ENCODE measurements at regions of chr10 and their contacts with region 1.

Region 1: GRCh38 chr10:689433-690371 is at the start of gene DIP2C:
- DNase-seq: peak; percentile 92
- H3K4me3 ChIP-seq: peak within 1 kb of the TSS; percentile 82 to 97 (median 90)
- H3K27ac ChIP-seq: peak within 1 kb of the TSS; percentile 95 to 99 (median 98)
- H3K4me1 ChIP-seq: peaks cover 0 to 48% (median 31%) of the 10 kb centered on the region in 4 donors
- H3K27me3 ChIP-seq: no peaks in the 10 kb centered on the region
- CTCF ChIP-seq: no peak
- EP300 ChIP-seq: no peak
- POLR2A ChIP-seq: peak in 1 of 2 donors; percentile 12
- total RNA-seq, gene DIP2C: 42.1 to 67.9 (median 50.3) TPM

Region 2: GRCh38 chr10:451021-451471 is 238.7 kb before region 1 on chr10:
- intact Hi-C with region 1: loop called (anchors 5 kb)
- DNase-seq: no peak
- H3K4me3 ChIP-seq: no peak overlapping the region
- H3K27ac ChIP-seq: peak overlapping the region; percentile 11 to 83 (median 74)
- H3K4me1 ChIP-seq: peaks cover 0 to 52% (median 45%) of the 10 kb centered on the region in 4 donors
- H3K27me3 ChIP-seq: no peaks in the 10 kb centered on the region
- CTCF ChIP-seq: no peak
- EP300 ChIP-seq: no peak
- POLR2A ChIP-seq: no peak

Region 3: DNA sequence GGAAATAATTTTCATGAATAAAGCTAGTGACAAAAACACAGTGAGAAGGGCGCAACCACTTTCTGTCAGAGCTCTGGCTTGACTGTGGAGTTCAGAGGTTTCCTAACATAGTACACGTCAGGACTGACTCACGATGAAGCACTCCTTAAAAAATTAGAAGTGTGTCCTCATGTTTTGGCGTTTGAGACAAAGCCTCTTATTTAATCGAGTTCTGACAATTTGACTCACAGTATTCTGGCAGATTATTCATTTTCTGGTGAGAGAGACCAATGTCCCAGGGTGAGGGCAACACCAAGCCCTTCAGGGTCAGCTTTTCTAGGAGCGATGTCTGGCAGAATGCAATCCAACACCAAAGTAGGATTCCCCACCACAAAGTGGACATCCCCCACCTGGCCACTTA is 108.9 kb before region 1 on chr10:
- intact Hi-C with region 1: loop called (anchors 5 kb)
- DNase-seq: no peak
- H3K4me3 ChIP-seq: no peak overlapping the region
- H3K27ac ChIP-seq: peak overlapping the region; percentile 55 to 71 (median 68)
- H3K4me1 ChIP-seq: peaks cover 0 to 61% (median 48%) of the 10 kb centered on the region in 4 donors
- H3K27me3 ChIP-seq: no peaks in the 10 kb centered on the region
- CTCF ChIP-seq: no peak
- EP300 ChIP-seq: no peak
- POLR2A ChIP-seq: no peak

Region 4: GRCh38 chr10:784403-785088 is 94.8 kb after region 1 on chr10:
- intact Hi-C with region 1: loop called (anchors 5 kb)
- DNase-seq: peak; percentile 86
- H3K4me3 ChIP-seq: peak overlapping the region; percentile 18 to 55 (median 45)
- H3K27ac ChIP-seq: peak overlapping the region in 2 of 4 donors; percentile 23 to 62
- H3K4me1 ChIP-seq: peaks cover 0 to 22% (median 13%) of the 10 kb centered on the region in 4 donors
- H3K27me3 ChIP-seq: no peaks in the 10 kb centered on the region
- CTCF ChIP-seq: no peak
- EP300 ChIP-seq: no peak
- POLR2A ChIP-seq: no peak

Region 5: DNA sequence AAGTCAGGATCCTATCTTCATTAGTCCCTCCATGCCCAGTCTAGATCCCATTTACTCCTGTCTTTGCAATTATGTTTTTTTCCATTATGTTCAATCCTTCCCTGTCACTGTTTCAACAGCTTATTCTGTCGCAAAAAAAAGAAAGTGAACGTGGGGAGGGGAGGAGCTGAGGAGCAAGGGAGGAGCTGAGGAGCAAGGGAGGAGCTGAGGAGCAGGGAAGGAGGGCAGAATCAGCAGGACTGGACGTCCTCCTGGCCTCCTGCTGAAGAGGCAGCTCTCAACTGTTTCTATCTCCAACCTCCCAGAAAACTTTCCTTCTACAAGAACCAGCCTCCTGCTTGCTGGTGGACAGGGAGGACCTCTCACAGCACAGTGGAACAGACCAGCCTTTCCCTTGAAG is 215.8 kb after region 1 on chr10:
- intact Hi-C with region 1: no loop called
- DNase-seq: no peak
- H3K4me3 ChIP-seq: no peak overlapping the region
- H3K27ac ChIP-seq: no peak overlapping the region
- H3K4me1 ChIP-seq: peaks cover 0 to 23% (median 18%) of the 10 kb centered on the region in 4 donors
- H3K27me3 ChIP-seq: no peaks in the 10 kb centered on the region
- CTCF ChIP-seq: no peak
- EP300 ChIP-seq: no peak
- POLR2A ChIP-seq: no peak

Measured in sigmoid colon (tissue), 7 donors.